Naive thymus-derived CD4-positive, alpha-beta T cell (primary cell): ENCODE measurements at regions of chr1 and their contacts with region 1.

Region 1: GRCh38 chr1:235328357-235329138 is at the start of gene GGPS1:
- DNase-seq: peak; percentile 95 to 99 (median 97)
- ATAC-seq: peak; percentile 87
- H3K4me3 ChIP-seq: peak within 1 kb of the TSS; percentile 82
- H3K4me3 Mint-ChIP-seq: no peak within 1 kb of the TSS
- H3K27ac ChIP-seq: peak within 1 kb of the TSS; percentile 100
- H3K27ac Mint-ChIP-seq: peak within 1 kb of the TSS in 2 of 9 donors; percentile 91 to 94
- H3K4me1 ChIP-seq: peaks cover 40 to 54% of the 10 kb centered on the region in 2 donors
- H3K4me1 Mint-ChIP-seq: peaks cover 23 to 42% (median 31%) of the 10 kb centered on the region in 7 donors
- H3K27me3 ChIP-seq: no peaks in the 10 kb centered on the region
- H3K27me3 Mint-ChIP-seq: no peaks in the 10 kb centered on the region
- total RNA-seq, gene GGPS1: 26.5 to 51.7 (median 30.2) TPM

Region 2: GRCh38 chr1:234478481-234479309 is 849.9 kb before region 1 on chr1 and contains the start of gene TARBP1:
- CTCF ChIA-PET with region 1: no interaction called
- POLR2A ChIA-PET with region 1: no interaction called
- intact Hi-C with region 1: loop called (anchors 2 kb)
- DNase-seq: peak; percentile 68 to 87 (median 83)
- ATAC-seq: peak; percentile 82
- H3K4me3 ChIP-seq: peak within 1 kb of the TSS; percentile 79
- H3K4me3 Mint-ChIP-seq: peak within 1 kb of the TSS; percentile 82 to 90 (median 90)
- H3K27ac ChIP-seq: peak within 1 kb of the TSS; percentile 75
- H3K27ac Mint-ChIP-seq: peak within 1 kb of the TSS; percentile 73 to 95 (median 85)
- H3K4me1 ChIP-seq: peaks cover 0 to 16% of the 10 kb centered on the region in 2 donors
- H3K4me1 Mint-ChIP-seq: peaks cover 14 to 44% (median 39%) of the 10 kb centered on the region in 7 donors
- H3K27me3 ChIP-seq: no peaks in the 10 kb centered on the region
- H3K27me3 Mint-ChIP-seq: peaks cover 0 to 19% (median 3%) of the 10 kb centered on the region in 5 donors
- total RNA-seq, gene TARBP1: 45.8 to 49.6 (median 47.5) TPM

Region 3: DNA sequence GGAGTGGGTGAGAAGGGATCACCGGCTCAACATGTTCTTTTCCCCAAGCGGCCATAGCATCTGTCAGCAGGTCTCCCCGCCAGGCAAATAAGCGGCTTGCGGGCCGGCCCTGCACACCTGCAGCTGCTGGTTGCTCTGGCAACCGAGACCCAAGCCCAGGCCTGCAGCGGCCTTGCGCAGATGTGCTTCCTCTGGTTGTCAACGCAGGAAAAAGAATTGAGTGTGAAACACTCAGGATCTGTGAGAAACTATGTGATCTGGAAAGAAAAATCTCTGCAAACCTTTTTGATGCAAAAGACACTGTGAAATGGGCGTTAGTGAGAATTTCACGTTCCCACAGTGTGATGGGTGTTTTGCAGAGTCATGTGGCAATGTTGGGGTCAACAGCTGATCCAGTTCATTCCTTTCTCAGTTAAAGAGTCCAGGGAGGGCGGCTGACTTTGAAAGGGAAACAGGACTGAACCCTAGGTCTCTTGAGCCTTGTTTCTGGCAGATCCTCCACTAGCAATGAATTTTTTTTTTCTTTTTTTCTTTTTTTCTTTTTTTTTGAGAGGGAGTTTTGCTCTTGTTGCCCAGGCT is 228.3 kb before region 1 on chr1:
- CTCF ChIA-PET with region 1: no interaction called
- POLR2A ChIA-PET with region 1: interaction called, 3 read pairs
- intact Hi-C with region 1: loop called (anchors 2 to 5 kb)
- DNase-seq: peak in 1 of 9 donors; percentile 4
- ATAC-seq: no peak
- H3K4me3 ChIP-seq: no peak overlapping the region
- H3K4me3 Mint-ChIP-seq: no peak overlapping the region
- H3K27ac ChIP-seq: no peak overlapping the region
- H3K27ac Mint-ChIP-seq: no peak overlapping the region
- H3K4me1 ChIP-seq: peaks cover 16 to 21% of the 10 kb centered on the region in 2 donors
- H3K4me1 Mint-ChIP-seq: peaks cover 20 to 38% (median 33%) of the 10 kb centered on the region in 7 donors
- H3K27me3 ChIP-seq: no peaks in the 10 kb centered on the region
- H3K27me3 Mint-ChIP-seq: peaks cover 0 to 5% (median 0%) of the 10 kb centered on the region in 5 donors

Region 4: DNA sequence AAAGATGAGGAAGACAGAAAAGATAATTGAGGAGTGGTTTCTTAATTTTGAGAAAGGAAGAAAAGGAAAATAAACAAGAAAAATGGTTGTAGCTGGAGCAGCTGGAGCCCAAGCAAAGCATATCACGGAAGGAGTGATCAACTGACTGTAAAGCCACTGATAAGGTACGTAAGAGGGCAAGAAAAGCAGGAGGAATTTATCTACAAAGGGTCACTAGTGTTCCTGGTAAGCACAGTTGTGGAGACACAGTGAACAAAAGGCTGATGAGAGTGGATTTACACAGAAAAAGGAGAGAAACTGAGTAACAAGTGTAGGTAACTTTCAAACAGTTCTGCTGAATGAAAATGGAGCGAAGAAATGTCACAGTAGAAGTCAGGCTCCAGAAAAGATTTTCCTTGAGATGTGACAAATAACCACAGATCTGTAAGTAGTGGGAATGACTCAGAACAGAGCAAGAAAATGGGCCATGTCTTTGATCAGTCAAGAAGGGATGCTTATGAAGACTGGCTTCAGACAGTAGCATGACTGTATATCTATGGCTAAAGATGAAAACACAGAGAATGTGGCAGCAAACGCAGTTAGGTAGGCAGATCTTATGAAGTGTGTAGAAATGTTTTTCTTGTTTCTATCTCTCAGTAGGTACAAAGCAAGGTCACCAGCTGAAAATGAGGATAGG is 121.9 kb before region 1 on chr1:
- CTCF ChIA-PET with region 1: no interaction called
- POLR2A ChIA-PET with region 1: no interaction called
- intact Hi-C with region 1: loop called (anchors 1 kb)
- DNase-seq: peak in 1 of 9 donors; percentile 47
- ATAC-seq: peak; percentile 79
- H3K4me3 ChIP-seq: no peak overlapping the region
- H3K4me3 Mint-ChIP-seq: peak overlapping the region; percentile 8 to 77 (median 60)
- H3K27ac ChIP-seq: peak overlapping the region; percentile 36
- H3K27ac Mint-ChIP-seq: peak overlapping the region; percentile 58 to 89 (median 85)
- H3K4me1 ChIP-seq: peaks cover 0 to 18% of the 10 kb centered on the region in 2 donors
- H3K4me1 Mint-ChIP-seq: peaks cover 18 to 42% (median 32%) of the 10 kb centered on the region in 7 donors
- H3K27me3 ChIP-seq: no peaks in the 10 kb centered on the region
- H3K27me3 Mint-ChIP-seq: no peaks in the 10 kb centered on the region

Region 5: GRCh38 chr1:235313931-235314678 is 14.4 kb before region 1 on chr1:
- CTCF ChIA-PET with region 1: interaction called, 4 read pairs
- POLR2A ChIA-PET with region 1: interaction called, 7 read pairs
- intact Hi-C with region 1: loop called (anchors 1 kb)
- DNase-seq: no peak
- ATAC-seq: no peak
- H3K4me3 ChIP-seq: no peak overlapping the region
- H3K4me3 Mint-ChIP-seq: peak overlapping the region in 9 of 10 donors; percentile 52 to 86 (median 73)
- H3K27ac ChIP-seq: peak overlapping the region; percentile 37
- H3K27ac Mint-ChIP-seq: peak overlapping the region; percentile 9 to 91 (median 78)
- H3K4me1 ChIP-seq: peaks cover 37 to 46% of the 10 kb centered on the region in 2 donors
- H3K4me1 Mint-ChIP-seq: peaks cover 48 to 75% (median 71%) of the 10 kb centered on the region in 7 donors
- H3K27me3 ChIP-seq: no peaks in the 10 kb centered on the region
- H3K27me3 Mint-ChIP-seq: no peaks in the 10 kb centered on the region

Region 6: GRCh38 chr1:235642011-235642942 is 313.7 kb after region 1 on chr1:
- CTCF ChIA-PET with region 1: no interaction called
- POLR2A ChIA-PET with region 1: no interaction called
- intact Hi-C with region 1: loop called in 1 of 2 experiments (anchors 5 kb)
- DNase-seq: peak; percentile 20 to 88 (median 40)
- ATAC-seq: peak; percentile 86
- H3K4me3 ChIP-seq: peak overlapping the region; percentile 42
- H3K4me3 Mint-ChIP-seq: peak overlapping the region; percentile 57 to 90 (median 82)
- H3K27ac ChIP-seq: no peak overlapping the region
- H3K27ac Mint-ChIP-seq: peak overlapping the region; percentile 8 to 95 (median 79)
- H3K4me1 ChIP-seq: peaks cover 4 to 26% of the 10 kb centered on the region in 2 donors
- H3K4me1 Mint-ChIP-seq: peaks cover 15 to 57% (median 19%) of the 10 kb centered on the region in 7 donors
- H3K27me3 ChIP-seq: no peaks in the 10 kb centered on the region
- H3K27me3 Mint-ChIP-seq: peaks cover 19 to 33% (median 29%) of the 10 kb centered on the region in 5 donors

Region 7: DNA sequence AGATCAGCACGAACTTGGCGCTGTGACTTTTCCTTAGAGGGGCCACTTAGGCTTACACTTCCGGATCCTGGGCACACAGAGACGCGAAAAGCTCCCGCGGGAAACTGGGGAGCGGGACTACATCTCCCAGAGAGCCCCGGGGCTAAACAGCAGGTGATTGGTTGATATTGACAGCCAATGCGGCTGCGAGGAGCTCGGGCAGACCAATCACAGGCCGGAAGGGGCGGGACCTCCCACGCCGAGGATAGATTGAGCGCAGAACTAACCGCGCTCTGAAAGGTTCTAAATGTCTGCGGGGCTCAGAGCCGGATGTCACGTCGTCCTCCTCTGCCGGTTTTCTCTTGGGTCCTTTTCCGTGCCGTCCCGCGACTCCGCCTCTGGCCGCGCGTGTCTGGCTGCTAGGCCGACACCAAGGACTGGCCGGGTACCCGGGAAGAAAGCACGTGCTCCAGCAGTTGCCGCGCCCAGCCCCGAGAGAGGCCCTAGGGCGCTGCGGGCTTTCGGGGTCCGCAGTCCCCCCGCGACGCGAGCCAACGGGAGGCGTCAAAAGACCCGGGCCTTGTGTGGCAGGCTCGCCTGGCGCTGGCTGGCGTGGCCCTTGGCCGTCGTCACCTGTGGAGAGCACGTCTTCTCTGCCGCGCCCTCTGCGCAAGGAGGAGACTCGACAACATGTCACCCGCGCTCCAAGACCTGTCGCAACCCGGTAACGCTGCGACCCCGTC is 1466.6 kb after region 1 on chr1 and contains the start of gene MTR:
- CTCF ChIA-PET with region 1: no interaction called
- POLR2A ChIA-PET with region 1: interaction called, 3 read pairs
- intact Hi-C with region 1: loop called (anchors 2 to 5 kb)
- DNase-seq: peak; percentile 84 to 97 (median 96)
- ATAC-seq: peak; percentile 95
- H3K4me3 ChIP-seq: peak within 1 kb of the TSS; percentile 61
- H3K4me3 Mint-ChIP-seq: peak within 1 kb of the TSS; percentile 87 to 99 (median 95)
- H3K27ac ChIP-seq: peak within 1 kb of the TSS; percentile 98
- H3K27ac Mint-ChIP-seq: peak within 1 kb of the TSS; percentile 93 to 100 (median 97)
- H3K4me1 ChIP-seq: peaks cover 13 to 14% of the 10 kb centered on the region in 2 donors
- H3K4me1 Mint-ChIP-seq: peaks cover 14 to 49% (median 41%) of the 10 kb centered on the region in 7 donors
- H3K27me3 ChIP-seq: no peaks in the 10 kb centered on the region
- H3K27me3 Mint-ChIP-seq: peaks cover 0 to 13% (median 0%) of the 10 kb centered on the region in 5 donors
- total RNA-seq, gene MTR: 42.9 to 78.8 (median 49.4) TPM